Endothelial cell of umbilical vein (primary cell): ENCODE measurements at regions of chr13 and their contacts with region 1.

Region 1: DNA sequence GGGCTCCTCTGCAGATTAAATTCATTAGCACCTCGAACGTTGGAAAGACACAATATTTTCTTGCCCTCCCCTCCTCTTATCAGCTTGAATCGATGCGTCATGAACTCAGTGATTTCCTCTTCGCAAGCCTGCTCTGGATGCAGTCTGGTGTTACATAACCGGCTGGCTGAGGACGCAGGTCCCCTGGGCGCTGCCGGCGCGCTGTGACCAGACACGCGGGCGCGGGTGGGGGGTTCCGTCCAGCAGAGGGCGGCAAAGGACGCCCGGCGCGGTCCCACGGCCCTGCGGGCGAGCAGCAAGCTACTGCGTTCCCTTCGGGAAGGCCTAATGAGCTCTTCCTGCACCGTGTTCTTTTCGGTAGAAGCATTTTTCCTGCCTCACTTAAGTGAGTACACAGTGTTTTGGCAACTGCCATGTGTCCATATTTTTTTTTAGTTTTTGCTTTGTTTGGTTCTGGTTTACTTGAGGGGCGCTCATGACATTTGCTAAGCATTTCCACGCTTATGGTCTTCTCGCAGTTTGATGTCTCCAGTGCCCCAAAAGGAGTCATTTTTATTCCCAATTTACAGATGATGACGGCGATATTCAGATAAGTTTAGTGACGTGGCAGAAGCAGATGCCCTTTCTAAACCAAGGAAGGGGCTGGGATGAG is 112.2 kb upstream of the MBNL2 start:
- DNase-seq: peak; percentile 93
- H3K4me3 ChIP-seq: no peak overlapping the region
- H3K27ac ChIP-seq: no peak overlapping the region
- H3K4me1 ChIP-seq: peaks cover 17% of the 10 kb centered on the region
- H3K27me3 ChIP-seq: no peaks in the 10 kb centered on the region
- CTCF ChIP-seq: peak; percentile 96 to 99
- POLR2A ChIP-seq: no peak

Region 2: GRCh38 chr13:97018029-97018831 is 91.7 kb before region 1 on chr13:
- CTCF ChIA-PET with region 1: interaction called, 17 read pairs
- POLR2A ChIA-PET with region 1: no interaction called
- dilution Hi-C with region 1: no loop called
- intact Hi-C with region 1: loop called (anchors 1 kb)
- DNase-seq: peak; percentile 70
- H3K4me3 ChIP-seq: no peak overlapping the region
- H3K27ac ChIP-seq: no peak overlapping the region
- H3K4me1 ChIP-seq: no peaks in the 10 kb centered on the region
- H3K27me3 ChIP-seq: peaks cover 14 to 18% of the 10 kb centered on the region in 2 experiments
- CTCF ChIP-seq: peak; percentile 71 to 78
- POLR2A ChIP-seq: no peak

Region 3: DNA sequence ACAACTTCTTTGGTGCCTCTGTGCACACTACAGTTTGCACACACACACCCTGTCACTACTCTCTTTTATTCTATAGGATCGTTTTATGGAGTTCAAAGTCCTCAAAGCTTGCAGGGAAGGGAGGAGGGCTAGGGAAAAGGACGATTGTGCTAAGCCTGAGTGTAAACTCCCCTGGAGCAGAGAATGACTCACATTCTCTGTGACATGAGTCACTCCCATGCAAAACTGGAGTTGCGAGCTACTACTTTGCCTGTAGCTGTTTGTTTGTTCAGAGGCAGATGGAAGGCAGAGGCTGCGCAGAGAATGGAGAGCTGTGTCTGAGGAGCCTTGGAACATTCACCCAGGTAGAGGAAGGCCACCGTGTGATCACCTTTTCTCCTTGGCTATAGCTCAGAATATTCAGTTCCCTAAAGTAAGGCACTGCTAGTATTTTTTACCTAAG is 31.6 kb after region 1 on chr13:
- CTCF ChIA-PET with region 1: interaction called, 44 read pairs
- POLR2A ChIA-PET with region 1: no interaction called
- dilution Hi-C with region 1: no loop called
- intact Hi-C with region 1: loop called (anchors 1 kb)
- DNase-seq: peak; percentile 87
- H3K4me3 ChIP-seq: no peak overlapping the region
- H3K27ac ChIP-seq: no peak overlapping the region
- H3K4me1 ChIP-seq: peaks cover 19% of the 10 kb centered on the region
- H3K27me3 ChIP-seq: no peaks in the 10 kb centered on the region
- CTCF ChIP-seq: no peak
- POLR2A ChIP-seq: no peak

Region 4: DNA sequence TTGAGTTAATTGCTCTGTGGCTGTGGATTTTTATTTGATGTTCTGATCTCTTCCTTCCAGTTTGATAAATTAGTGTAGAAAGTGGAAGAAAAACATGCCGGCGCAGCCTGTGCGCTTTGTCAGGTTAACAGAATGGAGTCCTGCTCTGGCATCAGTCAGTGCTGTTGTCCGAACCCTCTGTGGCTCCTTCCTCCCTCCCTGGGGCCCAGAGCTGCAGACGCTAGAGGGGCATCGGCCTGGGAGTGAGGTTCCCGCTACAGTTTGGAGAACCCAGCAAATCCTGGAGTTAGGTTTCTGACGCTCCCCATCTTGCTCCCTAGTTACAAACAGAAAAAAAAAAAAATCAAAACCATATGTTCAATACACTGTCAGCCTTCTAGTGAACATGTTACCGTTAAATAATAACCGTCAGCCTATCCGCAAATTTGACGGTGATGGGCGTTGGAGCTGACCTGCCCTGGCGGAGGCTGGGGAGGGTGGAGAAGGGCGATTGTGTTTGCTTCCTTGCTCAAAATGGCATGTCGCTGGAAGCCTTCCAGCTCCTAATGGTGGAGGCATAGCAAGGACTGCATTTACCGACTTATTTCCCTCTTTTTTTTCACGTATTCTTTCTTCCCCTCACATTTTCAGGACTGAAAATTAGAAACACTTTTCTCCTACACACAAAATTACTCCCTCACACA is 125.7 kb after region 1 on chr13:
- CTCF ChIA-PET with region 1: interaction called, 34 read pairs
- POLR2A ChIA-PET with region 1: interaction called, 3 read pairs
- dilution Hi-C with region 1: no loop called
- intact Hi-C with region 1: no loop called
- DNase-seq: peak; percentile 64
- H3K4me3 ChIP-seq: peak overlapping the region in 2 of 3 experiments; percentile 13 to 33
- H3K27ac ChIP-seq: peak overlapping the region; percentile 60
- H3K4me1 ChIP-seq: peaks cover 70% of the 10 kb centered on the region
- H3K27me3 ChIP-seq: no peaks in the 10 kb centered on the region
- CTCF ChIP-seq: no peak
- POLR2A ChIP-seq: no peak

Region 5: GRCh38 chr13:97268772-97269171 is 158.8 kb after region 1 on chr13:
- CTCF ChIA-PET with region 1: interaction called, 20 read pairs
- POLR2A ChIA-PET with region 1: no interaction called
- dilution Hi-C with region 1: no loop called
- intact Hi-C with region 1: no loop called
- DNase-seq: peak; percentile 72
- H3K4me3 ChIP-seq: no peak overlapping the region
- H3K27ac ChIP-seq: peak overlapping the region; percentile 77
- H3K4me1 ChIP-seq: peaks cover 71% of the 10 kb centered on the region
- H3K27me3 ChIP-seq: no peaks in the 10 kb centered on the region
- CTCF ChIP-seq: peak; percentile 35 to 36
- POLR2A ChIP-seq: no peak

Region 6: GRCh38 chr13:97359181-97360057 is 249.5 kb after region 1 on chr13:
- CTCF ChIA-PET with region 1: interaction called, 138 read pairs
- POLR2A ChIA-PET with region 1: interaction called, 4 read pairs
- dilution Hi-C with region 1: no loop called
- intact Hi-C with region 1: loop called (anchors 1 kb)
- DNase-seq: peak; percentile 81
- H3K4me3 ChIP-seq: no peak overlapping the region
- H3K27ac ChIP-seq: peak overlapping the region; percentile 20
- H3K4me1 ChIP-seq: no peaks in the 10 kb centered on the region
- H3K27me3 ChIP-seq: no peaks in the 10 kb centered on the region
- CTCF ChIP-seq: peak; percentile 66 to 80
- POLR2A ChIP-seq: no peak